Activated CD8-positive, alpha-beta T cell treated with anti-CD3 and anti-CD28 coated beads, Interleukin-2, amount 10 ng/mL, durations not matched to agents 7 days and 5 days (primary cell): ENCODE measurements at regions of chr1 and their contacts with region 1.

Region 1: DNA sequence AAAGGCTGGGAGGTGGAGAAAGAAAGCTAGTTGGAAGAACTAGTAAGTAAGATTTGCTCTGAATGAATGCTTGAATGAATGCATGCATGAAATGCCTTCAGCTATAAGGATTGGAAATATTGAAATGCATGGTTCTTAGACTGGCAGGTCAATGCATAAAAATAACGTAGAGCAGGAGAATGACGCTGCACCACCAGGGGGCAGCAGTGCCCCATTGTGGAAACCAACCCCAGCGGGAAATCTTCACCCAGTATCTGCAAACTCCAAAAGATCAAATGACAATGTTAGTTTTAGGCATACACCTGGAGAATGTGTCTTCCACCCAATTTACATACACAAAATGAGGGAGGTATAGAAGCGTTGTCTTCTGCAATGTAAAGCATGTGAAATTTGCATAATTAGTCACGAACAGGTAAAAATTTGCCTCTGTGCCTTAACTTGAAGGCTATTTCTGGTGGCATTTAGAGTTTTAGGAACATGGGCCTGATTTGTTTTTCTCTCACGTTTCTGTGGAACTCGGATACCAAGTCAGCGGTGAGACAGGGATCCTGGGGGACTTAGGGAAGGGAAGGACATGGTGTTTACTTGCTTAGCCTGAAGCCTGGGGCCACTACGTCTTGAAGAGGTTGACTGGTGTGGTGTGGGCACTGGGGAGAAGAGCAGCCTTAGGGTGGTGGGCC is 78.6 kb downstream of the HHAT start:
- DNase-seq: peak; percentile 79
- ATAC-seq: peak; percentile 81
- H3K4me3 Mint-ChIP-seq: no peak overlapping the region
- H3K27ac Mint-ChIP-seq: no peak overlapping the region
- H3K4me1 Mint-ChIP-seq: no peaks in the 10 kb centered on the region
- H3K27me3 Mint-ChIP-seq: peaks cover 3% of the 10 kb centered on the region

Region 2: GRCh38 chr1:210448297-210448892 is 41.0 kb after region 1 on chr1:
- CTCF ChIA-PET with region 1: interaction called, 23 read pairs
- POLR2A ChIA-PET with region 1: no interaction called
- DNase-seq: peak; percentile 49
- ATAC-seq: no peak
- H3K4me3 Mint-ChIP-seq: no peak overlapping the region
- H3K27ac Mint-ChIP-seq: no peak overlapping the region
- H3K4me1 Mint-ChIP-seq: peaks cover 18% of the 10 kb centered on the region
- H3K27me3 Mint-ChIP-seq: peaks cover 2% of the 10 kb centered on the region

Region 3: GRCh38 chr1:210584439-210585113 is 177.2 kb after region 1 on chr1:
- CTCF ChIA-PET with region 1: interaction called, 17 read pairs
- POLR2A ChIA-PET with region 1: interaction called, 4 read pairs
- DNase-seq: peak; percentile 83
- ATAC-seq: peak; percentile 90
- H3K4me3 Mint-ChIP-seq: no peak overlapping the region
- H3K27ac Mint-ChIP-seq: no peak overlapping the region
- H3K4me1 Mint-ChIP-seq: peaks cover 16% of the 10 kb centered on the region
- H3K27me3 Mint-ChIP-seq: peaks cover 3% of the 10 kb centered on the region